Posterior cingulate gyrus (tissue), 11 donors: ENCODE measurements at regions of chr19 and their contacts with region 1.

Region 1: DNA sequence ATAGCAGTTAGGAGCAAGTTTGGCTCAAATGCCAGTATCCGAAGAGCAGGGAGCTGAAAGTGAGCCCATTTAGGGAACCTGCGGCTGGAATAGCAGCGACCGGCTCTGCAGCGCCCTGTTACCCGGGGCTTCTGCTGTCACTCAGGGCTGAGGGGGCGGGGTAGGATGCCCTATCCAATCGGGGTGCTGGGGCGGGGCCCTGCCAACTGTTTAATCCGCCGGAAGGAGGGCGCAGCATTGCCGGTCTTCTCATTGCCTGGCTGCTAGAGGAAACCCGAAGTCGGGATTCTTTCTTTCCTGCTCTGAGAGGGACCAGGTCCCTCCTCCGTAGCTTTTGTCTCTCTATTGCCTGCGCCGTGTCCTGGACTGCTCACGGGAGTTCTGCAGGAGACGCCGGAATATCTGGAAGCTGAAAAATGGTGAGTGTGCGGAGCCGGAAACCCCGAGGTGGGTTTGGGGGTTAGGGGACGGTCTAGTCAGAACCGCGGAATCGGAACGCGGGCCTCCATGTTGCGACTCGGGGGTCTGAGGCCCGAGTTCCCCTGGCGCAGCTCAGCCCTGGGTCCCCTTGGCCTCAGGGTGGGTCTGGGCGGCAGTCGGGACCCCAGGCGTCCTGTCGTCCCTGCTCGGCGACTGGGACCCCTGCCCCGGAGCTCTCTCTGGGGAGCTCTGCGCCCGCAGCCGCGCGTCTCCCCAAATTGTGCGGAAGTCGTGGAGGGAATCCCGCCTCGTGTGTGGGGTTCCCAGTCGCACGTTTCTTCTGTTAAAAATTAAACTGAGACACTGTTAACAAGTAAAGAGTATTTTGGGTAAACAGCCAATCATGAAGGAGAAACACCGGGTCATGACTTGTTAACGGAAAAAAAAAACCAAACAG is 22.8 kb downstream of the ZNF763 start:
- DNase-seq: peak; percentile 83 to 99 (median 92)

Region 2: DNA sequence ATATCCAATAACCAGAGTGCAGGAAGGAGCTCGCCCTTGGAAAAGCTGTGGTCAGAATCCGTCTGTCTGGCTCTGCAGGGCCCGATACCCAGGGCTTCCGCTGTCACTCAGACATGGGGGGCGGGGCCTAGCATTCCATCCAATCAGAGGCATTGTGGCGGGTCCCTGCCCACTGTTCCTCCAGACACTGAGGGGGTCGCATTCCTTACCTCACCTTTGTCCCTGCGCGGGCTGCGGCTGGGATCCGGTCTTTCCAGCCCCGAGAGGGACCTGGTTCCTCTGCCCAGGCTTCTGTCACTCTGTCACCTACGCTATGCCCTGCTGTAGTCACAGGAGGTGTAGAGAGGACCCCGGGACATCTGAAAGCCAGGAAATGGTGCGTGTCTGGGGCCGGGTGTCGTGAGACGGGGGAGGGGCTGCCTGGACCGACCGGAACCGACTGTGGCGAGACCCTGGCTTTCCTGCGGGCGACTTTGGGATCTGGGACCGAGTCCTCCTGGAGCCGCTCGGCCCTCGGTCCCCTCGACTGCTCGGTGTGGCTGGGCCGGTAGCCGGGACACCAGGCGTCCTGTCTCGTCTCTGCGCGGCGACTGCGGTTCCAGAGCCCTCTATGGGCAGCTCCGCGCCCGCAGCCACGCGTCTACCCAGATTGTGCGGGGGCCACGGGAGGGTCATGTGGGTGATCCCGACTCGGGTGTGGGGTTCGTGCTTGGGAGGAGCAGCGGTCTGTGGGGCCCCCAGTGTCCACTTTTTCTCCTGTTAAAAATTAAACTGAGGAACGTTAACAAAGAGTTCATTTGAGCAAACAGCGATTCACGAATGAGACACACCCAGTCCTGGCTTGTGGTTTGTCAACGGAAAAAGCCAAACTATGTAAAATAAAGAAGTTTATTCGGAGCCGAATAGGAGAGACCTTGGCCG is 99.8 kb before region 1 on chr19 and contains the start of gene ZNF69:
- intact Hi-C with region 1: no loop called
- DNase-seq: peak; percentile 62 to 96 (median 80)

Region 3: DNA sequence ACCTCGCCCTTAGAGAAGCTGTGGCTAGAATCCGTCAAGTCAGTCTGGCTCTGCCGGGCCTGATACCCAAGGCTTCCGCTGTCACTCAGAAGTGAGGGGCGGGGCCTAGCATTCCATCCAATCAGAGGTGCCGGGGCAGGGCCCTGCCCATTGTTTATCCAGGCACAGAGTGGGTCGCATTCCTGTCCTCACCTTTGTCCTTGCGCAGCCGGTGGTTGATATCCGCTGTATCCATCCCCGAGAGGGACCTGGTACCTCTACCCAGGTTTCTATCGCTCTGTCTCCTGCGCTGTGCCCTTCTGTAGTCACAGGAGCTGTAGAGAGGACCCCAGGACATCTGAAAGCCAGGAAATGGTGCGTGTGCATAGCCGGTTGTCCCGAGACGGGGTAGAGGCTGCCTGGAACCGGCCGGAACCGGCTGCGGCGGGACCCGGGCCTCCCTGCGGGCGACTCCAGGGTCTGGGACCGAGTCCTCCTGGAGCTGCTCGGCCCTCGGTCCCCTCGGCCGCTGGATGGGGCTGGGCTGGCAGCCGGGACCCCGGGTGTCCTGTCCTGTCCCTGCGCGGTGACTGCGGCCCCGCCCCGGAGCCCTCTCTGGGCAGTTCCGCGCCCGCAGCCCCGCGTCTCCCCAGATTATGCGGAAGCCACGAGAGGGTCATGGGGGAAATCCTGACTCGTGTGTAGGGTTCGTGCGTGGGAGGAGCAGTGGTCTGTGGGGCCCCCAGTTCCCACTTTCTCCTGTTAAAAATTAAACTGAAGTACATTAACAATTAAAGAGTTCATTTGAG is 22.6 kb before region 1 on chr19 and contains the start of gene ZNF763:
- intact Hi-C with region 1: loop called (anchors 1 kb)
- DNase-seq: peak; percentile 80 to 99 (median 94)

Region 4: DNA sequence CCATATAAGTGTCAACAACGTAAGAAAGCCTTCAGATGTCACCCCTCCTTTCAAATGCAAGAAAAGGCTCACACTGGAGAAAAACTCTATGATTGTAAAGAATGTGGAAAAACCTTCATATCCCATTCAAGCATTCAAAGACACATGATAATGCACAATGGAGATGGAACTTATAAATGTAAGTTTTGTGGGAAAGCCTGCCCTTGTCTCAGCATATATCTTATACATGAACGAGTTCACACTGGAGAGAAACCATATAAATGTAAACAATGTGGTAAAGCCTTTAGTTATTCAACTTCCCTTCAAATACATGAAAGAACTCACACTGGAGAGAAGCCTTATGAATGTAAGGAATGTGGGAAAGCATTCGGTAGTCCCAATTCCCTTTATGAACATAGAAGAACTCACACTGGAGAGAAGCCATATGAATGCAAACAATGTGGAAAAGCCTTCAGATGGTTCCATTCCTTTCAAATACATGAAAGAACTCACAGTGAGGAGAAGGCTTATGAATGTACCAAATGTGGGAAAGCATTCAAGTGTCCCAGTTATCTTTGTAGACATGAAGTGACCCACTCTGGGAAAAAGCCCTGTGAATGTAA is 88.0 kb after region 1 on chr19:
- intact Hi-C with region 1: no loop called
- DNase-seq: no peak